ENCODE measurements at regions of chr20 and their contacts with region 1.

Region 1: GRCh38 chr20:62010551-62011402 is 54.9 kb downstream of the TAF4 start:
- DNase-seq: peak; percentile 51 to 69
- ATAC-seq: peak; percentile 65 to 84; a peak in 3 of 6 replicates
- H3K4me3 ChIP-seq: no peak overlapping the region
- H3K27ac ChIP-seq: no peak overlapping the region
- H3K4me1 ChIP-seq: no peaks in the 10 kb centered on the region
- CTCF ChIP-seq: peak; percentile 80
- EP300 ChIP-seq: no peak
- POLR2A ChIP-seq: no peak
- RAD21 ChIP-seq: peak; percentile 89 to 92

Region 2: DNA sequence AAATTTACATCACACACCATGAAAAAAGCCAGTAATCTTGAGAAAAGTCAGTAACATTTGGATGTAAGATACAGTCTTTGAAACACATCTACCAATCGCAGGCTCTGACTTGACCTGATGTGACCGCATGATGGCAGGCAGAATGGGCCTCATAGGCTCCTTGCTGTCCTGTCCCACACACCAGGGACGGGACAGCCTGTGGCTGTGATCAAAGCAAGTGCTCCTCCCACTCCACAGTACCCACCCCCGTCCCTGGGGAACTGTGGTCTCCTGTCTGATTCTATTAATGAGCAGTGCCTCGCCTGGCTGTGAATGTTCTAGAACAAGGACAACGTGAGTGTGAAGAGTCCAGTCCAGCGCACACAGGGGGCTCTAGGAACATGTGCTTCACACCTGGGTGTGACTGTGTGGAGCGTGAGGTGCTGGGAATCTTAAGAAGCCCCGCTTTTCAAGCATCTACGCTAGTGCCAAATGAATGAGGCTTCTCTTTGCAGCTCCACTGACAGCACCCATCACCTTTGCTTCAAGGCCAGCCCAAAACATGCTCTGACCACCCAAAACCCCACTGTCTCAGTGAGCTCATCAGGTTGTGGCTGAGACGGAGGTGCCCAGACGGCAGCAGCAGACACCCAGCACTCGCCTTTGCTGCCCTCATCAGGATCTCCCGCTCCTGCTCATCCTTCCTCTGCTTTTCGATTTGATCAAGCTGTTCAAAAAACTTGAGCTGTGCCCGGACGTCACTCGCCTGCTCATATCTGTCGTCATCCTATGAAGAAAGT is 12.2 kb before region 1 on chr20:
- CTCF ChIA-PET with region 1: interaction called, 14 read pairs
- POLR2A ChIA-PET with region 1: no interaction called
- DNase-seq: no peak
- ATAC-seq: 0 out of 6 replicates have a peak, but pooled peaks of 1 of the 2 experiments have one; percentile 21
- H3K4me3 ChIP-seq: no peak overlapping the region
- H3K27ac ChIP-seq: no peak overlapping the region
- H3K4me1 ChIP-seq: no peaks in the 10 kb centered on the region
- CTCF ChIP-seq: no peak
- EP300 ChIP-seq: no peak
- POLR2A ChIP-seq: no peak
- RAD21 ChIP-seq: no peak

Region 3: GRCh38 chr20:62039738-62040137 is 29.0 kb after region 1 on chr20:
- CTCF ChIA-PET with region 1: interaction called, 11 read pairs
- POLR2A ChIA-PET with region 1: no interaction called
- DNase-seq: no peak
- ATAC-seq: no peak
- H3K4me3 ChIP-seq: no peak overlapping the region
- H3K27ac ChIP-seq: no peak overlapping the region
- H3K4me1 ChIP-seq: peaks cover 10% of the 10 kb centered on the region; the same call in 2 of the 3 replicates
- CTCF ChIP-seq: no peak
- EP300 ChIP-seq: no peak
- POLR2A ChIP-seq: no peak
- RAD21 ChIP-seq: no peak

Region 4: DNA sequence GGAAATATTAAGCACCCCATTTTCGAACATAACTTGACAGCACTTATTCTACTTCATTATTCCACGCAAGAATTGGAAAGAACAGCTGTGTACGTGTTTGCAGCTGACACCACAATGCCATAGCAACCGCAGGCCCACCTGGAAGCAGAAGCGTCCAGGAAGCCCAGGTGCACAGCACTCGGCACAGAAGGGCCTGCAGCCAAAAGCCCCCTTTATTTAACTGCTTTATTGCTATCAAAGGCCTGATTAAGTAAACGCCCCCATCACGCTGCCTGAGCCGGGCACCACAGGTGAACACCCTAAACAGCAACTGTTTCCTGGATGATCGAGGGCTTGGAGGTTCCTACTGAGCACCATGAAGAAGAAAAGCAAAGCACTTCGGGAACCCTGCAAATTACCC is 48.6 kb after region 1 on chr20:
- CTCF ChIA-PET with region 1: interaction called, 11 read pairs
- POLR2A ChIA-PET with region 1: no interaction called
- DNase-seq: no peak
- ATAC-seq: no peak
- H3K4me3 ChIP-seq: no peak overlapping the region
- H3K27ac ChIP-seq: no peak overlapping the region
- H3K4me1 ChIP-seq: peaks cover 13% of the 10 kb centered on the region
- CTCF ChIP-seq: no peak
- EP300 ChIP-seq: no peak
- POLR2A ChIP-seq: no peak
- RAD21 ChIP-seq: no peak

Region 5: DNA sequence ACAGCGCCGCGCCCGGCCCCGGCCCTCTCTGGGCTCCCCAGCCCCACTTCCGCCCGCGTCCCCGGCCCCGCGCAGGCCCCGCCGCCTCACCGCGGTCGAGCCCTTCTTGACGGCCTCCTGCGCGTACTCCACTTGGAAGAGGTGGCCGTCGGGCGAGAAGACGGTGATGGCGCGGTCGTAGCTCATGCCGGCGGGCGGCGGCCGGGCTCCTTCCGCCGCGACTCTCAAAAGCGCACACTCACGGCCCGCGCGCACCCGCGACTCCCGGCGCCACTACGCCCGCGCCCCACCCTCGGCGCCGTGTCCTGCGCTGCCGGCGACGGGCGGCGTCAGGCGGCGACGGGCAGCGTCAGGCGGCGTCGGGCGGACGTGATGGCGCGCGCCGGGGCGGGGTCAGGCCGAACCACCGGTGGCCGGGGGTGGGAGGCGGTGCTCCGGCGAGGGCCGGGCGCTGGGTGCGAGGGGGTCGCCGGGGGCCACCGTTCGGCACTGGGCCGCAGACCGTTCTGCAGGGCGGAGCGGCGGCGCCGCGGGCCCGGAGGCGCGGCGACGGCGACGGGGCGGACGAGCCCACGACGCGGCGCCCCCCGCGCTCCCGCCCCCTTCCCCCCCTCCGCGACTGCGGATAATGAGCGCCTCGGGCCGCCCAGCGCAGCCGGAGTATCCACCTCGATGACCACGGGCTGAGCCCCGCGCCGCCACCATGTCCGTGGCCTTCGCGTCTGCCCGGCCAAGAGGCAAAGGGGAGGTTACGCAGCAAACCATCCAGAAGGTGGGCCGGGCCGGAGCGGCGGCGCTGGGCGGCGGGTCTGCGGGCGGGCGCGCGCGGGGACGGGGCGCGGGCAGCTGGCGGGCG is 132.6 kb after region 1 on chr20 and contains the starts of genes PSMA7 and SS18L1:
- CTCF ChIA-PET with region 1: interaction called, 75 read pairs
- POLR2A ChIA-PET with region 1: no interaction called
- DNase-seq: peak; percentile 75 to 90
- ATAC-seq: peak; percentile 82 to 84
- H3K4me3 ChIP-seq: peak within 1 kb of the TSS; percentile 98
- H3K27ac ChIP-seq: peak within 1 kb of the TSS; percentile 98
- H3K4me1 ChIP-seq: peaks cover 18% of the 10 kb centered on the region
- CTCF ChIP-seq: no peak
- EP300 ChIP-seq: no peak
- POLR2A ChIP-seq: peak; percentile 85
- RAD21 ChIP-seq: no peak
- polyA plus RNA-seq, gene PSMA7: 494 and 562 TPM in 2 replicates
- polyA plus RNA-seq, gene SS18L1: 7.4 and 7.5 TPM in 2 replicates

Region 6: DNA sequence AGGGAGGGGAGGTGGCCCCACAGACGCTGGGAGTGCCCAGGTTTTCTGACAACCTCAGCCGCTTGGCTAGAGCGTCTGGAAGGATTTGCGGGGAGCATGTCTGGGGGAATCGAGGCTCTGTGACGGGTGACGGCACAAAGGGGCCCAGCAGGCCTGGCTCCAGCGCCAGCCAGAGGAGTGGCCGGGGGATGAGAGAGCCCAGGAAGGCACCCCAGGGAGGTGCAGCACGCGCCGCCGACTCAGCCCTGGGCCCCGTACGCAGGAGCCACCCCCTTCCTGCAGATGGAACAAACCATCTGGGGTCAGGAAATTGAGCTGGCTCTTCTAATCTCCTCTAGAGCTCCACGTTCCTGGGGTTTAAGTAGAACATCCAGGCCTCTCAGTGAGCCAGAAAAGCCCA is 625.7 kb after region 1 on chr20:
- CTCF ChIA-PET with region 1: no interaction called
- POLR2A ChIA-PET with region 1: no interaction called
- DNase-seq: no peak
- ATAC-seq: no peak
- H3K4me3 ChIP-seq: no peak overlapping the region
- H3K27ac ChIP-seq: no peak overlapping the region
- H3K4me1 ChIP-seq: 0 out of 3 replicates have a peak, but pooled peaks cover 2% of the 10 kb centered on the region
- CTCF ChIP-seq: no peak
- EP300 ChIP-seq: no peak
- POLR2A ChIP-seq: no peak
- RAD21 ChIP-seq: no peak